Endothelial cell of umbilical vein (primary cell): ENCODE measurements at regions of chr3 and their contacts with region 1.

Region 1: GRCh38 chr3:156300929-156301815 is 180.8 kb downstream of the KCNAB1 start:
- DNase-seq: peak; percentile 47
- H3K4me3 ChIP-seq: no peak overlapping the region
- H3K27ac ChIP-seq: no peak overlapping the region
- H3K4me1 ChIP-seq: peaks cover 34% of the 10 kb centered on the region
- H3K27me3 ChIP-seq: no peaks in the 10 kb centered on the region
- CTCF ChIP-seq: no peak
- POLR2A ChIP-seq: no peak

Region 2: GRCh38 chr3:155846119-155846518 is 455.1 kb before region 1 on chr3:
- CTCF ChIA-PET with region 1: no interaction called
- POLR2A ChIA-PET with region 1: no interaction called
- dilution Hi-C with region 1: no loop called
- intact Hi-C with region 1: no loop called
- DNase-seq: no peak
- H3K4me3 ChIP-seq: no peak overlapping the region
- H3K27ac ChIP-seq: no peak overlapping the region
- H3K4me1 ChIP-seq: no peaks in the 10 kb centered on the region
- H3K27me3 ChIP-seq: no peaks in the 10 kb centered on the region
- CTCF ChIP-seq: no peak
- POLR2A ChIP-seq: no peak

Region 3: GRCh38 chr3:156260331-156260730 is 40.8 kb before region 1 on chr3:
- CTCF ChIA-PET with region 1: no interaction called
- POLR2A ChIA-PET with region 1: no interaction called
- dilution Hi-C with region 1: no loop called
- intact Hi-C with region 1: loop called (anchors 2 kb)
- DNase-seq: no peak
- H3K4me3 ChIP-seq: no peak overlapping the region
- H3K27ac ChIP-seq: peak overlapping the region; percentile 56
- H3K4me1 ChIP-seq: peaks cover 14% of the 10 kb centered on the region
- H3K27me3 ChIP-seq: no peaks in the 10 kb centered on the region
- CTCF ChIP-seq: no peak
- POLR2A ChIP-seq: no peak

Region 4: GRCh38 chr3:156664831-156665178 is 363.6 kb after region 1 on chr3:
- CTCF ChIA-PET with region 1: no interaction called
- POLR2A ChIA-PET with region 1: no interaction called
- dilution Hi-C with region 1: no loop called
- intact Hi-C with region 1: no loop called
- DNase-seq: no peak
- H3K4me3 ChIP-seq: no peak overlapping the region
- H3K27ac ChIP-seq: no peak overlapping the region
- H3K4me1 ChIP-seq: peaks cover 17% of the 10 kb centered on the region
- H3K27me3 ChIP-seq: no peaks in the 10 kb centered on the region
- CTCF ChIP-seq: no peak
- POLR2A ChIP-seq: no peak

Region 5: DNA sequence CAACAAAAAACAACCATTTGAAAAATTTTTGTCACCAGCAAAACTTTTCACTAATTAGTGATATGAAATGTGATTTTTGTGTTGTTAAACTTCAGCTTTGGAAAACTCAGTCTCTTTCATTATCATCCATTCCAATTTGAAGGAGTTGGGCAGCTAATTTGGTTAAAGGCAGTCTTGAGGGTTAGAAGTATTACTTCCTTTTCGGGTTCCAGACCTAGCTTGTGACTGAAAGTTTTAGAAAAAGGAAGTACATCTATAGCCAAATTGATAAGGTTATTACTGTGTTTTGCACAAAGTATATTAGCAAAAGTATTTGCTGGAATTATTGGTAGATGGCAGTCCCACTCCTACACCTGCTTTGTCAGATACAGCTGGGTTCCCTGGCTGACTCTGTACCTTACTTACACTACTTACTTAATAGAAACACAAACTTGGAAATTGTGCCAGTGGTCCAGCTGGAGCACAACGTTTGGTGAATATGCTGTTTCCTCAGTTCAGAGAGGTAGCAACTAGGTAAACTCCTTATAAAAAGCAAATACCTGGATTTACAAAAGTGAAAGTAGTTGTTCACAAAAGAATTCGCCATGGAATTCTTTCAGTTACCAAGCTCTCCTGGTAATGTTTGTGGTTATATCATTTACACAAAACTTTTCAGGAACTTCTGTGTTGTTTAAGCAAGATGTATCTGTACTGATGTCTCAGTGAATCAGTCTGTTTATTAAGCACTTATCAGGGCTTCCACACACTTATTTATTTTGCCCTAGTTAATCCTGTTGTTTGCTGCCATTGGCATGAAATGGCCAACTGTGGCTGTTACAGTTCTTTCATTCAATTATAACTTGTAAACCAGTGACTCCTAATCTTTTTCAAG is 404.8 kb after region 1 on chr3:
- CTCF ChIA-PET with region 1: no interaction called
- POLR2A ChIA-PET with region 1: no interaction called
- dilution Hi-C with region 1: no loop called
- intact Hi-C with region 1: no loop called
- DNase-seq: no peak
- H3K4me3 ChIP-seq: no peak overlapping the region
- H3K27ac ChIP-seq: no peak overlapping the region
- H3K4me1 ChIP-seq: no peaks in the 10 kb centered on the region
- H3K27me3 ChIP-seq: no peaks in the 10 kb centered on the region
- CTCF ChIP-seq: no peak
- POLR2A ChIP-seq: no peak